Endothelial cell of umbilical vein (primary cell): ENCODE measurements at regions of chr15 and their contacts with region 1.

Region 1: DNA sequence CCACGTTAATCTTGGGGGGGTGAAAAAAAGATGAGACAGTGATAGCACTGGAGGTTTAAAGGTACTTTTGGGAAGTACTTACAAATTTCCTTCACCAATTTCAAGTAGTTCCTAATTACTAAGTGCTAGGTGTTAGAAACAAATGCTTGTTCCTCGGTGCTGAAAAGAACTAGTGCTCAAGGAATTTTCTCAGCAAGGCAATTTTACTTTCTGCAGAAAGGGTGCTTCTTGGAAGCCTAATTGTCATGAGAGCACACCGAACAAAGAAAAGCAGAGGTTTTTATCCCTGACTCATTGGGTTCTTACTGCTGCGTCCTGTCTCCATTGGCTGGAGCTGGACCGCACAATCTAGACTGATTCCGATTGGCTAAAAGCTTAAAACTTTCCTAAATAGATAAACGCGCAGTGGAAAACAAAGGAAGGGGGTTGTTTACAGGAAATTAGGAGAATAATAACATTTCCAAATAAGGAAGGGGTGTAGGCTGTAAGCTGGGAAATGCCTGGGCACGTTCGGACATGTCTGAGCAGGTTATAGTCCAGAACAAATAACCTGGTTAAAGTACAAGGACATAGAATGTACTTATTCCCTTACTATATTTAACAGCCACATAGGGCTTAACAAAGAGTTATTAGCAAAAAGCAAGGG is 49.6 kb downstream of the CHD2 start:
- DNase-seq: no peak
- H3K4me3 ChIP-seq: no peak overlapping the region
- H3K27ac ChIP-seq: peak overlapping the region; percentile 29
- H3K4me1 ChIP-seq: peaks cover 2% of the 10 kb centered on the region
- H3K27me3 ChIP-seq: no peaks in the 10 kb centered on the region
- CTCF ChIP-seq: no peak
- POLR2A ChIP-seq: no peak

Region 2: DNA sequence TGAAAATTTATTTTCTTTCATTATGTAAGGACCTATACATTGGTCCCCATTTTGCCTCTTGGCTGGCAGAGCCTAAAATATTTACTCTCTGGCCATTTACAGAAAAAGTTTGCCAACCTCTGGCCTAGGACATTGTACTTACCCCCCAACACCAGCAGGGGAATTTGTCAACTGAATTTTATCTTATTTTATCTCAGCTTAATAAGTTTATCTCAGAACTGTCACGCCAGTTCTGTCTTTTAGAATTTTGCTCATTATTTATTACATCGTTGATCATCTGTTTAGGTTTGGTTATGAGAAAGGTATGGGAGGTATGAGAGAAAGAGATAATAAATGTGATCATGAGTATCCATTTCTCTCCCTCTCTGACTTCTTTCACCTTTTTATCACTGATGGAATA is 11.3 kb before region 1 on chr15:
- CTCF ChIA-PET with region 1: interaction called, 5 read pairs
- POLR2A ChIA-PET with region 1: no interaction called
- dilution Hi-C with region 1: no loop called
- intact Hi-C with region 1: loop called (anchors 2 kb)
- DNase-seq: no peak
- H3K4me3 ChIP-seq: no peak overlapping the region
- H3K27ac ChIP-seq: no peak overlapping the region
- H3K4me1 ChIP-seq: no peaks in the 10 kb centered on the region
- H3K27me3 ChIP-seq: no peaks in the 10 kb centered on the region
- CTCF ChIP-seq: no peak
- POLR2A ChIP-seq: no peak

Region 3: DNA sequence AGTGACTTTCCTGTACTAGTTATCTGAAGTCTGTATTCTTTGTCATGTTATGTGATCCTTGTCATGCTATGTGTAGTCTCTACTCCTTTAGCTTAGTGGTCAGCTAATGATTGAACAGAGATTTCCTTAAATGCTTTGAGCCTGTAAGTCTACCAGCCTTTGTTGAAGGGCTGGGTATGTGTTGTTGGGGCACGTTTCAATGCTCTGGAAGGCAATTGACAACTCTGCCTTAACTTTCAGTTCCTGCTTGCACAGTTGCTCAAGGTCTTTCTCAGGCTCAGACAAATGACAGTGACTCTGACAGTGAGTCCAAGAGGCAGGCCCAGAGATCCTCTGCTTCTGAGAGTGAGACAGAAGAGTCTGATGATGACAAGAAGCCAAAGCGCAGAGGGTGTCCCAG is 39.7 kb after region 1 on chr15:
- CTCF ChIA-PET with region 1: no interaction called
- POLR2A ChIA-PET with region 1: no interaction called
- dilution Hi-C with region 1: loop called (anchors 10 kb)
- intact Hi-C with region 1: no loop called
- DNase-seq: no peak
- H3K4me3 ChIP-seq: no peak overlapping the region
- H3K27ac ChIP-seq: no peak overlapping the region
- H3K4me1 ChIP-seq: no peaks in the 10 kb centered on the region
- H3K27me3 ChIP-seq: no peaks in the 10 kb centered on the region
- CTCF ChIP-seq: no peak
- POLR2A ChIP-seq: no peak